ENCODE measurements at regions of chr10 and their contacts with region 1.

Region 1: DNA sequence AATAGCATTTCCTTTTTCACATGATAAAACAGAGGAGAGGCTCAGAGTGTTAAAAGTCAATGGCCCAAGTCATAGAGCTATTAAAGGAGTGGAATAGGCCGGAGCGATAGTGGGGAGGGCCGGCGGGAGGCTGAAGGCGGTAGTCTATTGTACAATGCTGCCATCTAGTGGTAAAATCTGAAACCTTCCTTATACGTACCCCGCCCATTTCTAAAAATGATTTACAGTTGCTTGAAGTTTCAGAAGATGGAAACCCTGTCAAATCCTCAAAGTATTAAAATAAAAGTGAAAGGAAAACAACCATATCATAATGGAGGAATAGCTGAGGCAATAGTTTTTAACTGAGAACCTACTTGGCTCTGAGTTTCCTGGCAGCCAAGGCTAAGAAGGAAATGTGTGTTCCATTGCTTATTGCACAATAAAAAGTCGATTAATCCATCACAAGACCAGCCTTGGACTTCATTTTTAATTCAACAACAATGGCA is 209.1 kb downstream of the CCSER2 start:
- DNase-seq: no peak
- H3K4me3 ChIP-seq: no peak overlapping the region
- H3K27ac ChIP-seq: no peak overlapping the region
- H3K4me1 ChIP-seq: peaks cover 2 to 8% (median 3%) of the 10 kb centered on the region in 4 experiments; a peak in 5 of 7 replicates
- H3K27me3 ChIP-seq: peaks cover 0 to 4% (median 0%) of the 10 kb centered on the region in 4 experiments; a peak in 3 of 7 replicates
- CTCF ChIP-seq: peak; percentile 12 to 81 (median 43)
- EP300 ChIP-seq: no peak
- POLR2A ChIP-seq: no peak
- RAD21 ChIP-seq: peak; percentile 92

Region 2: GRCh38 chr10:84264611-84265141 is 272.8 kb before region 1 on chr10:
- CTCF ChIA-PET with region 1: interaction called, 558 read pairs
- POLR2A ChIA-PET with region 1: interaction called, 4 read pairs
- DNase-seq: peak; percentile 31 to 87
- H3K4me3 ChIP-seq: no peak overlapping the region
- H3K27ac ChIP-seq: no peak overlapping the region
- H3K4me1 ChIP-seq: no peaks in the 10 kb centered on the region
- H3K27me3 ChIP-seq: no peaks in the 10 kb centered on the region
- CTCF ChIP-seq: peak; percentile 89 to 99 (median 97)
- EP300 ChIP-seq: no peak
- POLR2A ChIP-seq: no peak
- RAD21 ChIP-seq: peak; percentile 98 to 99

Region 3: GRCh38 chr10:84352251-84352842 is 185.1 kb before region 1 on chr10:
- CTCF ChIA-PET with region 1: interaction called, 91 read pairs
- POLR2A ChIA-PET with region 1: interaction called, 4 read pairs
- DNase-seq: peak in 1 of 2 experiments; percentile 74
- H3K4me3 ChIP-seq: no peak overlapping the region
- H3K27ac ChIP-seq: no peak overlapping the region
- H3K4me1 ChIP-seq: peaks cover 0 to 8% (median 3%) of the 10 kb centered on the region in 4 experiments; a peak in 4 of 7 replicates
- H3K27me3 ChIP-seq: no peaks in the 10 kb centered on the region
- CTCF ChIP-seq: peak; percentile 73 to 92 (median 88)
- EP300 ChIP-seq: no peak
- POLR2A ChIP-seq: no peak
- RAD21 ChIP-seq: peak; percentile 73 to 83

Region 4: GRCh38 chr10:84392181-84392580 is 145.3 kb before region 1 on chr10:
- CTCF ChIA-PET with region 1: interaction called, 10 read pairs
- POLR2A ChIA-PET with region 1: no interaction called
- DNase-seq: no peak
- H3K4me3 ChIP-seq: no peak overlapping the region
- H3K27ac ChIP-seq: no peak overlapping the region
- H3K4me1 ChIP-seq: peaks cover 0 to 7% (median 0%) of the 10 kb centered on the region in 4 experiments; a peak in 2 of 7 replicates
- H3K27me3 ChIP-seq: no peaks in the 10 kb centered on the region
- CTCF ChIP-seq: no peak
- EP300 ChIP-seq: no peak
- POLR2A ChIP-seq: no peak
- RAD21 ChIP-seq: no peak

Region 5: DNA sequence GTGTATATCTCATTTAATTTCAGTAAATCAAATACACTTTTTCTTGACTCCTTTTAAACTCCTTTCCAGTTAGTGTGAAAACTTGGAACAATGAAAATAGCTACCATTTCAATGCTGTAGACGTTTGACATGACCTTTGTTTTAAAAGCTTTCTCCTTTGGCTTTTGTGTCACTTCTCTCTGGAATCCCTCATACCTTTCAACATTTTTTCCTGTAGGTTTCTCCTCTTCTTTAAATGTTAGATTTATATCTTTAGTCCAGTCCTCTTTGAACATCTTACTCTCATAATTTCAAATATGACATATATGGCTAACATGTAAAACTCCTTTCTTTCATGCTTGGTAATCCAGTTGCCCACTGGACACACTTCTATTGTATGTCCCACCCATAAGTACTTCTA is 70.5 kb before region 1 on chr10:
- CTCF ChIA-PET with region 1: interaction called, 14 read pairs
- POLR2A ChIA-PET with region 1: no interaction called
- DNase-seq: no peak
- H3K4me3 ChIP-seq: no peak overlapping the region
- H3K27ac ChIP-seq: no peak overlapping the region
- H3K4me1 ChIP-seq: peaks cover 0 to 3% (median 0%) of the 10 kb centered on the region in 4 experiments; a peak in 2 of 7 replicates
- H3K27me3 ChIP-seq: no peaks in the 10 kb centered on the region
- CTCF ChIP-seq: no peak
- EP300 ChIP-seq: no peak
- POLR2A ChIP-seq: no peak
- RAD21 ChIP-seq: no peak

Region 6: GRCh38 chr10:84563868-84564267 is 26.4 kb after region 1 on chr10:
- CTCF ChIA-PET with region 1: interaction called, 14 read pairs
- POLR2A ChIA-PET with region 1: no interaction called
- DNase-seq: no peak
- H3K4me3 ChIP-seq: no peak overlapping the region
- H3K27ac ChIP-seq: no peak overlapping the region
- H3K4me1 ChIP-seq: peaks cover 0 to 9% (median 6%) of the 10 kb centered on the region in 4 experiments; a peak in 3 of 7 replicates
- H3K27me3 ChIP-seq: no peaks in the 10 kb centered on the region
- CTCF ChIP-seq: no peak
- EP300 ChIP-seq: no peak
- POLR2A ChIP-seq: no peak
- RAD21 ChIP-seq: no peak

Region 7: DNA sequence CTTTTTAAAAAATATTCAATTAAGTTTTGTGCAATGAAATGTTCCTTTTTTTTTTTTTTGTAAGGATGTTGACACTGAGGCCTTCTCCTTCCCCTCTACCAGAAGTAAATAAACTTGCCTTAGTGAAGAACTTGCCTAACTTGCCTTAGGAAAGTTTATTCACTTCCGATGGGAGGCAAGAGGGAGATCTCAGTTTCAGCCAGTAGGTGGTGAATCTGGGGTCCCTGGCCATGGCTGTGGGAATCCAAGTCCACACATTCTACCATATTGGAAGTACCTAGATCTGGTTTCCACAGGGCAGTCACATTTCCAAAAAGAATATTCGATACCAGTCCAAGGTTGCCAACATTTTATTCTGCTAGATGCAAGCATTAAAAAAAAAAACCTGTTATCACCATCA is 61.8 kb after region 1 on chr10:
- CTCF ChIA-PET with region 1: interaction called, 140 read pairs
- POLR2A ChIA-PET with region 1: no interaction called
- DNase-seq: no peak
- H3K4me3 ChIP-seq: no peak overlapping the region
- H3K27ac ChIP-seq: no peak overlapping the region
- H3K4me1 ChIP-seq: peaks cover 0 to 7% (median 4%) of the 10 kb centered on the region in 4 experiments; a peak in 4 of 7 replicates
- H3K27me3 ChIP-seq: peaks cover 7 to 25% (median 21%) of the 10 kb centered on the region in 4 experiments
- CTCF ChIP-seq: peak; percentile 44 to 51 (median 50)
- EP300 ChIP-seq: no peak
- POLR2A ChIP-seq: no peak
- RAD21 ChIP-seq: peak in 1 of 2 experiments; percentile 28; a peak in 2 of 4 replicates

Region 8: GRCh38 chr10:84805149-84805548 is 267.7 kb after region 1 on chr10:
- CTCF ChIA-PET with region 1: no interaction called
- POLR2A ChIA-PET with region 1: no interaction called
- DNase-seq: no peak
- H3K4me3 ChIP-seq: no peak overlapping the region
- H3K27ac ChIP-seq: no peak overlapping the region
- H3K4me1 ChIP-seq: no peaks in the 10 kb centered on the region
- H3K27me3 ChIP-seq: no peaks in the 10 kb centered on the region
- CTCF ChIP-seq: no peak
- EP300 ChIP-seq: no peak
- POLR2A ChIP-seq: no peak
- RAD21 ChIP-seq: no peak

Measured in H1 (cell line).